Caco-2 (cell line): ENCODE measurements at regions of chr3 and their contacts with region 1.

Region 1: GRCh38 chr3:150721285-150722130 is 17.8 kb upstream of the ERICH6 start:
- DNase-seq: peak in 1 of 2 experiments; percentile 56
- H3K4me3 ChIP-seq: no peak overlapping the region
- H3K4me3 Mint-ChIP-seq: no peak overlapping the region
- H3K27ac Mint-ChIP-seq: no peak overlapping the region
- H3K4me1 ChIP-seq: peaks cover 9% of the 10 kb centered on the region
- H3K4me1 Mint-ChIP-seq: peaks cover 9% of the 10 kb centered on the region
- H3K27me3 ChIP-seq: no peaks in the 10 kb centered on the region
- H3K27me3 Mint-ChIP-seq: peaks cover 3% of the 10 kb centered on the region
- CTCF ChIP-seq: peak; percentile 60 to 72

Region 2: GRCh38 chr3:150737874-150738713 is 16.6 kb after region 1 on chr3:
- CTCF ChIA-PET with region 1: no interaction called
- POLR2A ChIA-PET with region 1: no interaction called
- intact Hi-C with region 1: loop called (anchors 1 kb)
- DNase-seq: no peak
- H3K4me3 ChIP-seq: no peak overlapping the region
- H3K4me3 Mint-ChIP-seq: no peak overlapping the region
- H3K27ac Mint-ChIP-seq: peak overlapping the region; percentile 56
- H3K4me1 ChIP-seq: peaks cover 41% of the 10 kb centered on the region
- H3K4me1 Mint-ChIP-seq: peaks cover 33% of the 10 kb centered on the region
- H3K27me3 ChIP-seq: no peaks in the 10 kb centered on the region
- H3K27me3 Mint-ChIP-seq: no peaks in the 10 kb centered on the region
- CTCF ChIP-seq: no peak

Region 3: GRCh38 chr3:150763122-150763841 is 41.8 kb after region 1 on chr3 and contains the start of gene SIAH2:
- CTCF ChIA-PET with region 1: interaction called, 3 read pairs
- POLR2A ChIA-PET with region 1: no interaction called
- intact Hi-C with region 1: loop called (anchors 1 kb)
- DNase-seq: peak; percentile 91 to 92
- H3K4me3 ChIP-seq: peak within 1 kb of the TSS; percentile 95
- H3K4me3 Mint-ChIP-seq: peak within 1 kb of the TSS; percentile 89
- H3K27ac Mint-ChIP-seq: peak within 1 kb of the TSS; percentile 96
- H3K4me1 ChIP-seq: peaks cover 35% of the 10 kb centered on the region
- H3K4me1 Mint-ChIP-seq: peaks cover 7% of the 10 kb centered on the region
- H3K27me3 ChIP-seq: no peaks in the 10 kb centered on the region
- H3K27me3 Mint-ChIP-seq: no peaks in the 10 kb centered on the region
- CTCF ChIP-seq: no peak
- total RNA-seq, gene SIAH2: 25.6 and 31.8 TPM in 2 replicates

Region 4: DNA sequence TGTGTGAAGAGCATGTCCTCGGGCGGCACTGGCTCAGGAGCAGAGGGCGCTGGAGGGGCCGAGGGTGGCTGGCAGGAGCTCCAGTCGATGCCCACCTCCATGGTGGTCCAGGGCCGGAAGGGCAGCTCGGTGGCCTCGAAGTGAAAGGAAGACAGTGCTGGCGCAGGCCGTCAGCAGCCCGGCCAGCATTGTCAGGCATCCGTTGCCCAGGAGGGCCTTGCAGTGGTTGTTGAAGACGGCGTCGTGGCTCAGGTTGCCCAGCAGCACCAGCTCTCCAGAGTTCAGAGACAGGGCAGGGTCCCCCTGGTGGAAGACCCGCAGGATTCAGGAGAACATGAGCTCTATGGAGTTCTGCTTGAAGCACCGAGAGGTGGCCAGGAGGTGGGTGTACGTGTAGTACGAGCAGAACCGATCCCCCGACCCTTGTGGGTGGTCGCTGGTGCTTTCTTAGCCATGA is 57.9 kb after region 1 on chr3:
- CTCF ChIA-PET with region 1: interaction called, 6 read pairs
- POLR2A ChIA-PET with region 1: no interaction called
- intact Hi-C with region 1: loop called (anchors 1 kb)
- DNase-seq: peak; percentile 45 to 50
- H3K4me3 ChIP-seq: no peak overlapping the region
- H3K4me3 Mint-ChIP-seq: no peak overlapping the region
- H3K27ac Mint-ChIP-seq: no peak overlapping the region
- H3K4me1 ChIP-seq: no peaks in the 10 kb centered on the region
- H3K4me1 Mint-ChIP-seq: no peaks in the 10 kb centered on the region
- H3K27me3 ChIP-seq: no peaks in the 10 kb centered on the region
- H3K27me3 Mint-ChIP-seq: peaks cover 3% of the 10 kb centered on the region
- CTCF ChIP-seq: peak in 1 of 2 experiments; percentile 59

Region 5: DNA sequence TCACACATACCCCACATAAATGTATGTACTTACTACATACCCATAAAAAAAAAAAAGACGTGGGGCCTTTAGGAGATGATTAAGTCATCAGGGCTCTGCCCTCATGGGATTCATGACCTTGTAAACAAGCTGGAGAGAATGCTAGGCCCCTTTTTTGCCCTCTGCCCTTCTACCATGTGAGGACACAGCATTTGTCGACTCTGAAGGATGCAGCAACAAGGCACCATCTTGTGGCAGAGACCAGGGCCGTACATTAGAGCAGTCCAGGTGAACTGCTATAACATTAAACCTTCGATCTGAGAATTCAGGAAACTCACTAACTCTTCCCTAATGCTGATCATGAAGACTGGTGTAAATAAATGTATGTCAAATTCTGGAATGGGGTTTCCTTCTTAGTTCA is 72.1 kb after region 1 on chr3:
- CTCF ChIA-PET with region 1: interaction called, 3 read pairs
- POLR2A ChIA-PET with region 1: no interaction called
- intact Hi-C with region 1: loop called (anchors 1 kb)
- DNase-seq: no peak
- H3K4me3 ChIP-seq: no peak overlapping the region
- H3K4me3 Mint-ChIP-seq: no peak overlapping the region
- H3K27ac Mint-ChIP-seq: no peak overlapping the region
- H3K4me1 ChIP-seq: 0 out of 2 replicates have a peak, but pooled peaks cover 4% of the 10 kb centered on the region
- H3K4me1 Mint-ChIP-seq: no peaks in the 10 kb centered on the region
- H3K27me3 ChIP-seq: no peaks in the 10 kb centered on the region
- H3K27me3 Mint-ChIP-seq: peaks cover 8% of the 10 kb centered on the region
- CTCF ChIP-seq: peak in 1 of 2 experiments; percentile 10

Region 6: DNA sequence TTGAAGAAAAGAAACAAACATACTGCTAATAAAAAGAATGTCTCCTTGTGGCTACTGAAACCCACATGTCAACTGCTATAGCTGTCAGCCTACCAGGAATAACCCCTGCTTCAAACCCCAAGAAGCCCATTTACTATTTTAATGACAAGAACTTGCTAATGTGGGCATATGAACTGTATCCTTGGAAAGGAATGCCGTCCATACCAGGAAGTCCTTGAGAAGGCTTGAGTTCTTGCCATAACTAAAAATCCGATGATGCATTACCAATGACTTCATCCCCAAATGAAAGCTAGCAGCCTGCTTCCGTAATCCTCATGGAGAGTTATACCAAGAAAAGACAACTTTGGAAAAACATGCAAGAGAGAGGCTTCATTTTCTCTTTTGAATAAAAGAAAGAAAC is 148.9 kb after region 1 on chr3:
- CTCF ChIA-PET with region 1: interaction called, 5 read pairs
- POLR2A ChIA-PET with region 1: no interaction called
- intact Hi-C with region 1: loop called (anchors 1 kb)
- DNase-seq: no peak
- H3K4me3 ChIP-seq: no peak overlapping the region
- H3K4me3 Mint-ChIP-seq: no peak overlapping the region
- H3K27ac Mint-ChIP-seq: no peak overlapping the region
- H3K4me1 ChIP-seq: no peaks in the 10 kb centered on the region
- H3K4me1 Mint-ChIP-seq: no peaks in the 10 kb centered on the region
- H3K27me3 ChIP-seq: no peaks in the 10 kb centered on the region
- H3K27me3 Mint-ChIP-seq: peaks cover 11% of the 10 kb centered on the region
- CTCF ChIP-seq: no peak